ENCODE measurements at regions of chr3 and their contacts with region 1.

Region 1: GRCh38 chr3:184786280-184786941 is 25.6 kb upstream of the VPS8 start:
- DNase-seq: peak in 6 of 7 donors; percentile 41 to 73 (median 52)
- H3K4me3 ChIP-seq: no peak overlapping the region
- H3K27ac ChIP-seq: peak overlapping the region in 2 of 5 donors; percentile 17 to 21
- H3K4me1 ChIP-seq: no peaks in the 10 kb centered on the region
- H3K27me3 ChIP-seq: no peaks in the 10 kb centered on the region
- CTCF ChIP-seq: no peak
- POLR2A ChIP-seq: no peak

Region 2: GRCh38 chr3:184399410-184399809 is 387.0 kb before region 1 on chr3:
- intact Hi-C with region 1: loop called in 1 of 2 experiments (anchors 10 kb)
- DNase-seq: peak in 2 of 7 donors; percentile 50 to 61
- H3K4me3 ChIP-seq: no peak overlapping the region
- H3K27ac ChIP-seq: no peak overlapping the region
- H3K4me1 ChIP-seq: no peaks in the 10 kb centered on the region
- H3K27me3 ChIP-seq: no peaks in the 10 kb centered on the region
- CTCF ChIP-seq: no peak
- POLR2A ChIP-seq: no peak

Region 3: GRCh38 chr3:184748219-184749135 is 37.9 kb before region 1 on chr3:
- intact Hi-C with region 1: no loop called
- DNase-seq: no peak
- H3K4me3 ChIP-seq: no peak overlapping the region
- H3K27ac ChIP-seq: no peak overlapping the region
- H3K4me1 ChIP-seq: no peaks in the 10 kb centered on the region
- H3K27me3 ChIP-seq: no peaks in the 10 kb centered on the region
- CTCF ChIP-seq: peak in 1 of 6 experiments; percentile 15
- POLR2A ChIP-seq: no peak

Measured in adrenal gland (tissue), 19 donors.